ENCODE measurements at regions of chr3 and their contacts with region 1.

Region 1: DNA sequence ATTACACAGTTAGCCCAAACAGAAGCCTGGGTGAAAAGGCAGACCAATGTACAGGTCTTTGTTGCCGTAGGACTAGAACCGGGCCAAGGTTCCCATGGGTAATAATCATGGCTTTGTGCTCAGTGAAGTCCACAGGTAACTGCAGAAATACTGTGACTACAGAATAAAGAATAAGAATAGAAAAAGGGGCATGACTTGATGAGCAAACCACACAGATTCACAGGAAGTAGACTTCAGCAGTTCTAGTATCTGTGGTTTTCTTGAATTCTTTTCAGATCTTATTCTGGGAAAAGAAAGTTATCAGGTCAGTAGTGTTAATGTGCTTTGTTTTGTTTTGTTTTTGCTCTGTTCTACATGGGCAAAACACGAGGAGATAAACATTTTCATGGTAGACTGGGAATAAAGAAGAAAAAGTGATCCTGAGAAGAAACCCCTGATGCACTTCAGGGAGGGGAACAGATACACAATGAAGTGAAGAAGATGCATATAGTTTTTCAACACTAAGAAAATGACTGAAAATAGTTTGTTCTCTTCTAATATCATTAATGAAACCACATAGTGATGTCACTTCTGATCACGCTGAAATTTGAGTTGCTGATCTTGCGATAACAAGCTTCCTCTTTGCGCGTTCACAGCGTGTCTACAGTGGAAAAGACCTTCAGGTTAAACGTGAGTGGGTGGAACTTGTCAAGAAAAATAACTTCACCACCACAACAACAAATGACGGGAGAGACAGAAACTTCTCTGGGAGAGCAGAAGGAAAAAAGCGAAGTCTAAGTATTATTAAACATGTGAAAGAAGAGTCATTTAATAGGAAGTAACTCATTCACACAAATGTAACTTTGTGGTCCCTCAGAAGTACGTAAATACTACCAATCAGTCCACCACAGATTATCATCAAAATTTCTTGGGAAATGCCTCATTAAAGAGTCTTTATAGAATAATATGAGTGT is 315.8 kb upstream of the SATB1 start:
- DNase-seq: peak in 8 of 9 donors; percentile 46 to 83 (median 70)
- ATAC-seq: peak; percentile 74
- H3K4me3 ChIP-seq: peak overlapping the region; percentile 28
- H3K4me3 Mint-ChIP-seq: peak overlapping the region; percentile 74 to 89 (median 84)
- H3K27ac ChIP-seq: peak overlapping the region; percentile 80
- H3K27ac Mint-ChIP-seq: peak overlapping the region; percentile 89 to 99 (median 96)
- H3K4me1 ChIP-seq: peaks cover 65 to 71% of the 10 kb centered on the region in 2 donors
- H3K4me1 Mint-ChIP-seq: peaks cover 52 to 97% (median 92%) of the 10 kb centered on the region in 7 donors
- H3K27me3 ChIP-seq: no peaks in the 10 kb centered on the region
- H3K27me3 Mint-ChIP-seq: no peaks in the 10 kb centered on the region

Region 2: DNA sequence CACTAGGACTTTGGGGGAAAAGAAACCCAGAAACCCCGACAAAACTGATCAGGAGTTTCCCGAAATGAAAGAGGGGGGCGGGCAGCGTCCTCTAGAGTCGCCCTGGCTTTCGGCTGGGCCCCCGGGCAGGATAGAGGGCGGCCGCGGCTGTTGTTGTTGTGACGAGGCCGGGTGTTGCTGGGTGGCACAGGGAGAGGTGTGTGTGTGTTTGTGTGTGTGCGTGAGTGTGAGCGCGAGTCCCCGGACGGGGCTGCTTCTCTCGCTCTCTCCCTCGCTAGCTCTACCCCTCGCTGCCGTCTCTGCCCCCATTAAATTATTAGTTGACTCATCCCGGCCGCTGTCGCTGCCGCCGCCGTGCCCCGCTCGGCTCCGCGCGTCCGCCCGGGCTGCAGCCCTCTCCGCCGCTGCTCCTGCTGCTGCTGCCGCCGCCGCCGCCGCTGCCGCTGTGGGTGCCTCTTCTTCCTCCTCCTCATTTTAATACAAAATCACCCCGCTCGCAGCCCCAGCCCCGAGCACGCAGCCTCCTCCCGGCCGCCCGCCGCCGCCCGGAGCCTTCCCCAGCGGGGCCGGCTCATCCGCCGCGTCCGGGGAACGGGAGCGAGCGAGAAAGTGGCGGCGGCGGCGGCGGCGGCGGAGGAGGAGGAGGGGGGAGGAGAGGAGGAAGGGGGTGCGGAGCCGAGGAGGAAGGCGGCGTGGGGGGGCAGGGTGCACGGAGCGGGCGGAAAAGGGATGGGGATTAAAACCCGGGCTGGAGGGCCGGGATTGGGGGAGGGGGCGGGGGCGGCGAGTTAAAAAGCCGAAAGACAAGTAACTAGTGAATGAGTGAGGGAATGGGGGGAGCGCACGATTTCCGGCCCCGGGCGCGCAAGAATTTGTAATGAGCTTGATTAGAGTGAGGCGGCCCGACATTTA is 315.9 kb before region 1 on chr3 and contains the start of gene SATB1:
- CTCF ChIA-PET with region 1: interaction called, 3 read pairs
- POLR2A ChIA-PET with region 1: interaction called, 3 read pairs
- intact Hi-C with region 1: loop called in 1 of 2 experiments (anchors 1 kb)
- DNase-seq: peak; percentile 55 to 72 (median 67)
- ATAC-seq: peak; percentile 62
- H3K4me3 ChIP-seq: peak within 1 kb of the TSS; percentile 72
- H3K4me3 Mint-ChIP-seq: peak within 1 kb of the TSS; percentile 91 to 100 (median 98)
- H3K27ac ChIP-seq: peak within 1 kb of the TSS; percentile 97
- H3K27ac Mint-ChIP-seq: peak within 1 kb of the TSS; percentile 87 to 99 (median 98)
- H3K4me1 ChIP-seq: peaks cover 8 to 21% of the 10 kb centered on the region in 2 donors
- H3K4me1 Mint-ChIP-seq: peaks cover 41 to 72% (median 62%) of the 10 kb centered on the region in 7 donors
- H3K27me3 ChIP-seq: no peaks in the 10 kb centered on the region
- H3K27me3 Mint-ChIP-seq: peaks cover 0 to 2% (median 0%) of the 10 kb centered on the region in 5 donors
- total RNA-seq, gene SATB1: 258 to 482 (median 451) TPM

Region 3: GRCh38 chr3:18649666-18650363 is 91.1 kb before region 1 on chr3:
- CTCF ChIA-PET with region 1: interaction called, 10 read pairs
- POLR2A ChIA-PET with region 1: no interaction called
- intact Hi-C with region 1: loop called in 1 of 2 experiments (anchors 1 kb)
- DNase-seq: peak in 8 of 9 donors; percentile 21 to 53 (median 33)
- ATAC-seq: peak; percentile 41
- H3K4me3 ChIP-seq: no peak overlapping the region
- H3K4me3 Mint-ChIP-seq: peak overlapping the region in 8 of 10 donors; percentile 14 to 66 (median 28)
- H3K27ac ChIP-seq: no peak overlapping the region
- H3K27ac Mint-ChIP-seq: peak overlapping the region; percentile 17 to 89 (median 56)
- H3K4me1 ChIP-seq: peaks cover 0 to 12% of the 10 kb centered on the region in 2 donors
- H3K4me1 Mint-ChIP-seq: peaks cover 22 to 77% (median 30%) of the 10 kb centered on the region in 7 donors
- H3K27me3 ChIP-seq: no peaks in the 10 kb centered on the region
- H3K27me3 Mint-ChIP-seq: no peaks in the 10 kb centered on the region

Region 4: GRCh38 chr3:18717598-18717997 is 23.3 kb before region 1 on chr3:
- CTCF ChIA-PET with region 1: interaction called, 4 read pairs
- POLR2A ChIA-PET with region 1: interaction called, 7 read pairs
- intact Hi-C with region 1: loop called in 1 of 2 experiments (anchors 1 kb)
- DNase-seq: peak in 1 of 9 donors; percentile 14
- ATAC-seq: no peak
- H3K4me3 ChIP-seq: no peak overlapping the region
- H3K4me3 Mint-ChIP-seq: peak overlapping the region in 8 of 10 donors; percentile 28 to 78 (median 60)
- H3K27ac ChIP-seq: no peak overlapping the region
- H3K27ac Mint-ChIP-seq: peak overlapping the region; percentile 20 to 95 (median 77)
- H3K4me1 ChIP-seq: peaks cover 43 to 50% of the 10 kb centered on the region in 2 donors
- H3K4me1 Mint-ChIP-seq: peaks cover 50 to 85% (median 71%) of the 10 kb centered on the region in 7 donors
- H3K27me3 ChIP-seq: no peaks in the 10 kb centered on the region
- H3K27me3 Mint-ChIP-seq: no peaks in the 10 kb centered on the region

Region 5: DNA sequence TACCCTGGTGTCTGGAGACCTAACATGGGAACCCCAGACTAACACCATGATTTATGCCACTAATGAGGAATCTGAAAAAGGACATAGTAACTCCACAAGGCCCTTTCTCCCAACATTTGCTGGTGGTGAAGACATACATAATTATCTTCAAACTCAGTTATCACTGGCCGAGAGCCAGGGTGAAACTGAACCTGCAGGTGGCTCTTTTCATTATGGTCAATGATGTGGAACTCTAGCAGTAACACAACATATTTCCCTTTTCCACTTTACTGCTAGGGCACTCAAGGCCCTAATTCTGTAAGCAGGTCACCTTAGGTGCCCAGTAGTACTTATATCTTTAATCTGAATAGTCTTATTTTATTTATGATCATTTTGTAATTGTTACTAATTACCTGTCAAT is 10.6 kb after region 1 on chr3:
- CTCF ChIA-PET with region 1: interaction called, 3 read pairs
- POLR2A ChIA-PET with region 1: interaction called, 9 read pairs
- intact Hi-C with region 1: loop called (anchors 1 kb)
- DNase-seq: no peak
- ATAC-seq: no peak
- H3K4me3 ChIP-seq: no peak overlapping the region
- H3K4me3 Mint-ChIP-seq: peak overlapping the region in 4 of 10 donors; percentile 4 to 42 (median 16)
- H3K27ac ChIP-seq: no peak overlapping the region
- H3K27ac Mint-ChIP-seq: peak overlapping the region in 7 of 9 donors; percentile 6 to 72 (median 37)
- H3K4me1 ChIP-seq: peaks cover 0 to 43% of the 10 kb centered on the region in 2 donors
- H3K4me1 Mint-ChIP-seq: peaks cover 39 to 93% (median 84%) of the 10 kb centered on the region in 7 donors
- H3K27me3 ChIP-seq: no peaks in the 10 kb centered on the region
- H3K27me3 Mint-ChIP-seq: no peaks in the 10 kb centered on the region

Region 6: DNA sequence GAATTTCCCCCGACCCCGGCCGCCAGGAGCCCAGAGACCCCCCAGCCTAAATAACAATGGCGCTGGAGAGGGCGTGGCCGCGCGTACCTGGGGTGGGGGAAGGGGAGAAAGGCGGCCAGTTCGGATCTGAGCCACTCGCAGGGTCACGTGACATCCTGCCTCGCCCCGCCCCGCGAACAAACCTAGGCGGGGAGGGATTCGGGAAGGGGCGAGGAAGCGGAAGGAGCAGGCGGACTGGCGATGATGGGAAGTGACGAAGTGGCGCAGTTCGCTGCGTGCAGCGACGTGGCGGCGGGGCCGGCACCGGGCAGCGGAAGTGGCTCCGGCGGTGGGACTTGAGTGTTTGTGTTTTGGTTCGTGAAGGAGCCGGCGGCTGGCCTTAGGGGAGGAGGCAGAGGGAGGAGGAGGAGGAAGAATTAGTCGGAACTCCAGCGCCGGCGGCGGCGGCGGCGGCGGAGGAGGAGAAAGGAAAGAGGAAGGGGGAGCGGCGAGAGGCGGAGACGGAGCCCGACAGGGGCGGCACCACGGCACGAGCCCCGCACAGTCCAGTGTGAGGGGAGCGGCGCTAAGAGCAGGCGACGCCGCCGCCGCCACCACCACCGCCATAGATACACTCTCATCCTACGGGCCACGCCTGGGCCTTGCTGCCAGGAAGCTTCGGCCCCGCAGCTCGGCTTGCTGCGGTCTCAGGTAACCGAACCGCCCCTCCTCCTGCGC is 1206.1 kb after region 1 on chr3 and contains the start of gene RAB5A:
- CTCF ChIA-PET with region 1: interaction called, 3 read pairs
- POLR2A ChIA-PET with region 1: no interaction called
- intact Hi-C with region 1: loop called in 1 of 2 experiments (anchors 5 kb)
- DNase-seq: peak; percentile 87 to 98 (median 96)
- ATAC-seq: peak; percentile 89
- H3K4me3 ChIP-seq: peak within 1 kb of the TSS; percentile 88
- H3K4me3 Mint-ChIP-seq: peak within 1 kb of the TSS; percentile 91 to 99 (median 97)
- H3K27ac ChIP-seq: peak within 1 kb of the TSS; percentile 94
- H3K27ac Mint-ChIP-seq: peak within 1 kb of the TSS; percentile 98 to 100 (median 99)
- H3K4me1 ChIP-seq: peaks cover 19 to 27% of the 10 kb centered on the region in 2 donors
- H3K4me1 Mint-ChIP-seq: peaks cover 25 to 68% (median 59%) of the 10 kb centered on the region in 7 donors
- H3K27me3 ChIP-seq: no peaks in the 10 kb centered on the region
- H3K27me3 Mint-ChIP-seq: peaks cover 0 to 3% (median 0%) of the 10 kb centered on the region in 5 donors
- total RNA-seq, gene RAB5A: 50.3 to 92.2 (median 58.9) TPM